A549 (cell line): ENCODE measurements at regions of chr9 and their contacts with region 1.

Region 1: GRCh38 chr9:20622330-20623020 is at the start of gene MLLT3:
- DNase-seq: peak; percentile 96
- ATAC-seq: peak; percentile 79 to 90
- H3K4me3 ChIP-seq: peak within 1 kb of the TSS; percentile 95
- H3K27ac ChIP-seq: peak within 1 kb of the TSS; percentile 90 to 96
- H3K4me1 ChIP-seq: peaks cover 24% of the 10 kb centered on the region
- CTCF ChIP-seq: no peak
- EP300 ChIP-seq: no peak
- POLR2A ChIP-seq: peak; percentile 27; the same call in 1 of the 2 replicates
- RAD21 ChIP-seq: peak in 1 of 2 experiments; percentile 1; a peak in 2 of 5 replicates
- polyA plus RNA-seq, gene MLLT3: 47.6 and 50.8 TPM in 2 replicates

Region 2: DNA sequence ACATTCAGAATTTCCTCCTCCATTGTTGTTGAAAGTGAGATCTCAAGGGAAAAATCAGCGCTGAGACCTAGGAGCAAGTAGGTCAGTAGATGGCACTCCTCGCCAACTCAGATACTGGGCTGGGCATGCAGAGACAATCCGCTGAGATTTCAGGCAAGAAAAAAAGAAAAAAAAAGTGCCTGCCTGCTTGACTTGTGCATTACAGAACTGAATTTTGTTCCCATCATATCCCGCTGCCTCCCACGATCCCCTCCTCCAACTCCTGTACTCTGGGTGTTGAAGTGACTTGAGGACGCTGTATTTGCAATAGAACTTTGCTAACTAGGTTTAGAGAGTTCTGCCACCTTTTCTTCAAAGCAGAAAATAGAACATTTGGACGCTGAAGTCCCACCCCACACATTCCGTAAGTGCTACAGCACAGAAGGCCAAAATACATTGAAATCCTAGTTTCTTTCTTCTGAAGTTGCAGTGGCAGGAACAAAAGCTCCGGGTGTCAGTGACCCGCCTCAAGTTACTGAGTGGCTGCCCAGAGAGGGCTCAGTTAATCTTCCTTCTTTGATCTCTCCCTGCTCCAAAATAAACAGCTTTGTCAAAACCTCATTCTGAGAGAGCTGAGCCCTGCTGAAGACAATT is 266.0 kb before region 1 on chr9:
- CTCF ChIA-PET with region 1: interaction called, 12 read pairs
- POLR2A ChIA-PET with region 1: no interaction called
- DNase-seq: peak; percentile 66 to 83
- ATAC-seq: peak; percentile 94 to 95
- H3K4me3 ChIP-seq: peak overlapping the region; percentile 18; the same call in 1 of the 3 replicates
- H3K27ac ChIP-seq: peak overlapping the region; percentile 46 to 60; a peak in 4 of 6 replicates
- H3K4me1 ChIP-seq: peaks cover 40% of the 10 kb centered on the region
- CTCF ChIP-seq: peak; percentile 94
- EP300 ChIP-seq: no peak
- POLR2A ChIP-seq: no peak
- RAD21 ChIP-seq: peak; percentile 95 to 96

Region 3: GRCh38 chr9:20558566-20559016 is 63.9 kb before region 1 on chr9:
- CTCF ChIA-PET with region 1: interaction called, 11 read pairs
- POLR2A ChIA-PET with region 1: interaction called, 16 read pairs
- DNase-seq: peak; percentile 53 to 78
- ATAC-seq: peak; percentile 86 to 96
- H3K4me3 ChIP-seq: no peak overlapping the region
- H3K27ac ChIP-seq: peak overlapping the region; percentile 62 to 82
- H3K4me1 ChIP-seq: peaks cover 86% of the 10 kb centered on the region
- CTCF ChIP-seq: no peak
- EP300 ChIP-seq: no peak
- POLR2A ChIP-seq: no peak
- RAD21 ChIP-seq: no peak

Region 4: GRCh38 chr9:20640331-20641187 is 18.1 kb after region 1 on chr9:
- CTCF ChIA-PET with region 1: interaction called, 47 read pairs
- POLR2A ChIA-PET with region 1: interaction called, 4 read pairs
- DNase-seq: no peak
- ATAC-seq: no peak
- H3K4me3 ChIP-seq: no peak overlapping the region
- H3K27ac ChIP-seq: no peak overlapping the region
- H3K4me1 ChIP-seq: no peaks in the 10 kb centered on the region
- CTCF ChIP-seq: no peak
- EP300 ChIP-seq: no peak
- POLR2A ChIP-seq: no peak
- RAD21 ChIP-seq: no peak

Region 5: GRCh38 chr9:20658677-20659473 is 36.4 kb after region 1 on chr9:
- CTCF ChIA-PET with region 1: interaction called, 12 read pairs
- POLR2A ChIA-PET with region 1: interaction called, 7 read pairs
- DNase-seq: peak; percentile 9 to 31
- ATAC-seq: peak; percentile 74 to 90
- H3K4me3 ChIP-seq: peak overlapping the region; percentile 87
- H3K27ac ChIP-seq: peak overlapping the region; percentile 86 to 91
- H3K4me1 ChIP-seq: peaks cover 19% of the 10 kb centered on the region; the same call in 1 of the 3 replicates
- CTCF ChIP-seq: no peak
- EP300 ChIP-seq: no peak
- POLR2A ChIP-seq: no peak
- RAD21 ChIP-seq: no peak

Region 6: DNA sequence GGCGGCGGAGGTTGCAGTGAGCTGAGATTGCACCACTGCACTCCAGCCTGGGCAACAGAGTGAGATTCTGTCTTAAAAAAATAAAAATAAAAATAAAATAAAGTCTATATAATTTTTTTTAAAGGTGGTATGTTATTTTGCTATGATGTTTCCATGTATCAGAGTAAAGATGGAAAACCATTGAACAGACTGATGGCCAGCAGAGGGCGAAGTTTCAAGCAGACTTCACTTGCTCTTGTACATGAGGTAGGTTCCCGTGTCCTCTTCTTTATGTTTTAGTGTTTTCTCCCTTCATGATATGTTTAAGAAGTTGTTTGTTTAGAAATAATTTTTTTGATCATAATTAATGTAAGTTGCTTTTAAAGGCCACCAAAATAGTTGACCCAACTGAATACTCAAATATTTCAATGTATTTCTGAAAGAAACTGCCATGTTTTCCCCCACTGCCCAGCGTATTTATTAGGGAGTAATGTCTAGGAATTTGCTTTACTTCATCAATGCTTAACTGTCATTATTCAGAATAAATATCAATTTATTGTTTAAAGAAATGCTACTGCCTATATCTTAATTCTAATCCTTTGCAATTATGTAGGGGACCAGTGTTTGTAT is 262.6 kb after region 1 on chr9:
- CTCF ChIA-PET with region 1: interaction called, 13 read pairs
- POLR2A ChIA-PET with region 1: interaction called, 6 read pairs
- DNase-seq: peak; percentile 9 to 71
- ATAC-seq: peak; percentile 64 to 83; a peak in 5 of 6 replicates
- H3K4me3 ChIP-seq: no peak overlapping the region
- H3K27ac ChIP-seq: no peak overlapping the region
- H3K4me1 ChIP-seq: no peaks in the 10 kb centered on the region
- CTCF ChIP-seq: peak; percentile 64
- EP300 ChIP-seq: no peak
- POLR2A ChIP-seq: no peak
- RAD21 ChIP-seq: peak; percentile 24 to 35; a peak in 2 of 5 replicates

Region 7: GRCh38 chr9:21102305-21102704 is 479.8 kb after region 1 on chr9:
- CTCF ChIA-PET with region 1: interaction called, 10 read pairs
- POLR2A ChIA-PET with region 1: no interaction called
- DNase-seq: no peak
- ATAC-seq: no peak; a peak in 1 of 6 replicates
- H3K4me3 ChIP-seq: no peak overlapping the region
- H3K27ac ChIP-seq: no peak overlapping the region
- H3K4me1 ChIP-seq: no peaks in the 10 kb centered on the region
- CTCF ChIP-seq: no peak
- EP300 ChIP-seq: no peak
- POLR2A ChIP-seq: no peak
- RAD21 ChIP-seq: no peak